ENCODE measurements at regions of chr5 and their contacts with region 1.

Region 1: GRCh38 chr5:116068028-116068632 is 16.7 kb upstream of the COMMD10 start:
- DNase-seq: no peak
- ATAC-seq: no peak

Region 2: DNA sequence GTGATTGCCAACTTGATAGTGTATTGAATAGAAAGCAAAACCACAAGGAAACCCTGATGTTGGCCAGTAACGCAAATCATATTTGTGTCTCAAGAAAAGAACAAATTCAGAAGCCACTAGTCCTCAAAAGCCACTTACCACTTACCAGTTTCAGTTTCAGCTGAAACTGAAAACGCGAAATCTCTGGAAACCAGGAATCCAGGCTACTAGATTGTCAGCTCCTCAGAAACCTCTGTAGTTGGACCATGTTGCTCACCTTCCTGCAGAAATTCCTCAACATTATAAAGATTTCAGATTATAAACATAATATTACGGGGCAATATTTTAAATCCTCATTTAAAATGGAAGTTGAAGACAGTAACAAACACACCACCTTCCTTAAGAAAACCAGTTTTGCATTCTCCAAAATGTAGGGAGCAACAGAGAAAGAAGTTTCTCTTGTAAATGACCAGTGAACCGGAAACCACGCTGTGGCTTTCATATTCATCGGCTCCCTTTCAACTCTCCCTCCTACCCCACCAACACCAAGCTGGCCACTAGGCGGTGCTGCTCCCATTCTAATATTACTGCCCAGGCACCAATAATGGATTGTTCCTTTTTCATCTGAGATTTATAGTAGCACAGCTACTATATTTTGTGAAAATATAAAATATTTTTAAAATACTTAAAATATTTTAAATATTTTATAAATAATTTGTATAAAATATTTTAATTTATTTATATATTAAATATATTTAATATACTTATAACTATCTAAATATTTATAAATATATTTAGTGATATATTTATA is 433.6 kb before region 1 on chr5:
- intact Hi-C with region 1: loop called (anchors 2 kb)
- DNase-seq: peak; percentile 92
- ATAC-seq: peak; percentile 97

Region 3: DNA sequence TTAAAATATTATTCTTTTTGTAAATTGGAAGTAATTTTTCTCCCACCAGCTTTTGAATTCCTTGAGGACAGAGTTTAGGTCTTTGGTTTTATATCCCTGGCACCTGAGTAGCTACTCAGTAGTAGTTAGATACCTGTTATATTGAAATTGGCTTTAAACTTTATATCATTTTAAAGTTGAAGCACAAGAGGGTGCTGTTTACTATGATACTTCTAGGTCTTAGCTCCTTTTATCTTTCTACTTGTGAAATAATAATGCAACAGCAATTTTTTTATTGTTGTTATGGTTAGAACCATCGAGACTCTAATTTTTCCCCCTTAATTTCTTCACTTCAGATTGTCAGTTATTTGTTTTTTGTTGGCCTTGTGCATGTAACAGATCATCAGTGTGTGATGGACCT is 180.1 kb before region 1 on chr5:
- intact Hi-C with region 1: loop called (anchors 10 kb)
- DNase-seq: no peak
- ATAC-seq: no peak

Measured in Right ventricle myocardium inferior (tissue), 1 donor.